ENCODE measurements at regions of chr6 and their contacts with region 1.

Region 1: DNA sequence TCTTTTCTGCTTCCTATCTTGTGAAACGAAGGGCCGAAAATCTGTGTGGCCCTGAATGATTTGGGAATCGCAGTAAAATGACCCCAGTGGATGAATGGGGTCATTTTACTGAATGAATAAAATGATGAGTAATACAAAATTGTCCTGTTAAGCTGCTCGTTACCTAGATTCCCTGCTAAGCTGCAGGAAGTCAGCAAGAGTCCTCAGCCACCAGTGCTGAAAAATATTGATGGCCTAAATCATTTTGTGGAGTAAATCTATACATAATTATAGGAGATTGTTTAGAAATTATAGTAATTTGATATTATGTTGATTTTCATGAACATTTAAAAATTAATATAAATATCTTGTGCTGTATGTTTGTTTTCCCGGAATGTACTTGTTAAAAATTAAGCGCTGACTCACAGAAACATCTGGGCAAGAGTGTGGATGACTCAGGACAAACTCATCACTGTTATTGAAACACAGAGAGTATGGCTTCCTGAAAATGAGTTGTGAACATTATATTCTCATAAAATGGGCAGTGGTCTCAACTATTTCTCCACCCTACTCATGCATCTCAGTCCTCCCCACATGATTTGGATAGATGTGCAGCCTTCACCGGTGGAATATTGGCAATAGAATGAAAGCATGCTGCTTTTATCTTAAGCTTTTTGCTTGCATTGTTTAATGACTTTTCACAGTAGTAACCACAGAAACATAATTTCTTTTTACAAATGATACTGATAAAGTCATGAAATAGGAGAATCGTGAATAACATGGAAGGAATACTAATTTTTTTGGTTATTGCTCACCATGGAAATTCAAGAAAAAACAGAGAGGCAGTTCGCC is 36.2 kb upstream of the RGS17 start:
- DNase-seq: peak; percentile 79
- H3K4me3 ChIP-seq: no peak overlapping the region
- H3K27ac ChIP-seq: peak overlapping the region; percentile 75
- H3K4me1 ChIP-seq: peaks cover 19% of the 10 kb centered on the region
- H3K27me3 ChIP-seq: no peaks in the 10 kb centered on the region
- CTCF ChIP-seq: no peak
- POLR2A ChIP-seq: no peak

Region 2: GRCh38 chr6:153131037-153131981 is 36.0 kb before region 1 on chr6 and contains the start of gene RGS17:
- CTCF ChIA-PET with region 1: no interaction called
- POLR2A ChIA-PET with region 1: no interaction called
- dilution Hi-C with region 1: no loop called
- intact Hi-C with region 1: loop called (anchors 1 kb)
- DNase-seq: peak; percentile 57
- H3K4me3 ChIP-seq: peak within 1 kb of the TSS; percentile 69 to 76 (median 70)
- H3K27ac ChIP-seq: peak within 1 kb of the TSS; percentile 8
- H3K4me1 ChIP-seq: peaks cover 14% of the 10 kb centered on the region
- H3K27me3 ChIP-seq: peaks cover 9 to 15% of the 10 kb centered on the region in 2 experiments
- CTCF ChIP-seq: no peak
- POLR2A ChIP-seq: no peak
- total RNA-seq, gene RGS17: 1.1 and 2.3 TPM in 2 replicates